ENCODE measurements at regions of chr6 and their contacts with region 1.

Region 1: GRCh38 chr6:16514249-16514648 is 247.0 kb downstream of the ATXN1 start:
- H3K4me3 Mint-ChIP-seq: no peak overlapping the region
- H3K27ac Mint-ChIP-seq: peak overlapping the region; percentile 32
- H3K4me1 Mint-ChIP-seq: peaks cover 79% of the 10 kb centered on the region
- H3K27me3 Mint-ChIP-seq: no peaks in the 10 kb centered on the region

Region 2: GRCh38 chr6:16570946-16571345 is 56.7 kb after region 1 on chr6:
- intact Hi-C with region 1: no loop called
- H3K4me3 Mint-ChIP-seq: no peak overlapping the region
- H3K27ac Mint-ChIP-seq: no peak overlapping the region
- H3K4me1 Mint-ChIP-seq: peaks cover 6% of the 10 kb centered on the region
- H3K27me3 Mint-ChIP-seq: no peaks in the 10 kb centered on the region

Region 3: GRCh38 chr6:16585805-16586204 is 71.6 kb after region 1 on chr6:
- intact Hi-C with region 1: loop called (anchors 10 kb)
- H3K4me3 Mint-ChIP-seq: peak overlapping the region; percentile 62
- H3K27ac Mint-ChIP-seq: peak overlapping the region; percentile 71
- H3K4me1 Mint-ChIP-seq: peaks cover 41% of the 10 kb centered on the region
- H3K27me3 Mint-ChIP-seq: no peaks in the 10 kb centered on the region

Region 4: DNA sequence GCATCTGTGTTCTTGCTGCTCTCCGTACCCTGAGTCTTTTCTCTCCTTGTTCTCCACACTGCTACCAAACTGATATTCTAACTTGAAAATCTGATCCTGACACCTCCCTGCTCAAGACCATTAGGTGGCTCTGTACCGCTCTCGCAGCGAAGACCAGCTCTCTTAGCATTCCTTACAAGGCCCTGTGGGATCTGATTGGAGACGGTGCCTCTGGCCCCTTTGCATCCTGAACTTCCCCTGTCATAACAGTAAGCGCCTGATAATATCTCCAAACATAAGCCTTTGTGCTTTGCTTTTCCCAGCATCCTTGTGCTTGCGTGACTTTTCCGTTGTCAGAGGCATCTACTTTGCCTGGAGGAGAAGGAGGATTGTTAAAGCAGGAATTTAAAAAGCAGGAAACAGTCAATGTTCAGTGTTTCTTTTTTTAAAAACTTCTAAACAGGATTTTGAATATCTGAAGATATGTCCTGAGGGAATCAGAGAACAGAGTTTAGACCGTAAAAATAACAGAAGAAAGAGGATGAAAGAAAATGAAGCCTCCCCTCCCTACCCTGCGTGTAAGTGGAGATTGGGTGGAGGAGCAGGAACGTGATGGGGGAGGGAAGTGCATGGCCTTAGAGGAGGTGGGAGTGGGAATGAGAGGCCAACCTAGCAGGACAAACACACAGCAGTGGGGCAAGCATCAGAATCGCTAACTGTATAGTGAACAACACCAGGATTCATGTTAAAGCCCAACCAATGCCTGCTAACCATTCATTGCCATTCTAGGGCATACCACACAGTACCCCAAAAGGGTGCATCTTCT is 498.4 kb after region 1 on chr6:
- intact Hi-C with region 1: no loop called
- H3K4me3 Mint-ChIP-seq: no peak overlapping the region
- H3K27ac Mint-ChIP-seq: no peak overlapping the region
- H3K4me1 Mint-ChIP-seq: peaks cover 5% of the 10 kb centered on the region
- H3K27me3 Mint-ChIP-seq: peaks cover 5% of the 10 kb centered on the region